PC-3 (cell line): ENCODE measurements at regions of chr11 and their contacts with region 1.

Region 1: GRCh38 chr11:18209058-18209457 is 27.5 kb downstream of the SAA4 start:
- DNase-seq: no peak
- ATAC-seq: no peak
- H3K4me3 ChIP-seq: no peak overlapping the region
- H3K27ac ChIP-seq: no peak overlapping the region
- H3K4me1 ChIP-seq: no peaks in the 10 kb centered on the region
- H3K27me3 ChIP-seq: peaks cover 16% of the 10 kb centered on the region
- CTCF ChIP-seq: no peak

Region 2: GRCh38 chr11:18253231-18253630 is 44.2 kb after region 1 on chr11:
- CTCF ChIA-PET with region 1: no interaction called
- POLR2A ChIA-PET with region 1: no interaction called
- intact Hi-C with region 1: loop called (anchors 1 kb)
- DNase-seq: no peak
- ATAC-seq: no peak
- H3K4me3 ChIP-seq: no peak overlapping the region
- H3K27ac ChIP-seq: no peak overlapping the region
- H3K4me1 ChIP-seq: no peaks in the 10 kb centered on the region
- H3K27me3 ChIP-seq: peaks cover 4% of the 10 kb centered on the region; the same call in 1 of the 2 replicates
- CTCF ChIP-seq: no peak

Region 3: GRCh38 chr11:18265949-18266348 is 56.9 kb after region 1 on chr11 and contains the start of gene SAA1:
- CTCF ChIA-PET with region 1: no interaction called
- POLR2A ChIA-PET with region 1: no interaction called
- intact Hi-C with region 1: no loop called
- DNase-seq: no peak
- ATAC-seq: no peak
- H3K4me3 ChIP-seq: no peak within 1 kb of the TSS
- H3K27ac ChIP-seq: no peak within 1 kb of the TSS
- H3K4me1 ChIP-seq: no peaks in the 10 kb centered on the region
- H3K27me3 ChIP-seq: 0 out of 2 replicates have a peak, but pooled peaks cover 6% of the 10 kb centered on the region
- CTCF ChIP-seq: no peak
- total RNA-seq, gene SAA1: not detected in 2 replicates

Region 4: DNA sequence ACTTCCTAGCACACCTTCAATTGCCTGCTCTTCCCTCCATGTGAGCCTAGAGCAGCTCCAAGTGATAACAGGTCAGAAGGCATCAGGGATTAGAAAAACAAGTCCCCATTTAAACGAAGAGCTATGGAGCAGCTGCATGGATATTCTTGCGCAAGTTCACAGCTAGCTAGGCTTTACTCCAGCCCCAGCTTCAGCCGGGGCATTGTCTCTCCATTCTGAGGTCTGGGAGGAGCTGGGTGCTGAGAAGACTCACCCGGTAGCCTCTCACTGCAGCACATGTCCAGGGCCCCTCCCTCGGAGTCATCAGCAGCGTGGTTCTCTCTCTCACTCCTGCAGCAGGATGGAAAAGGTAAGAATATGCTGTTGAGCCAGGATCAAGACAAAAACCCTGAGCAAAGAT is 556.5 kb after region 1 on chr11:
- CTCF ChIA-PET with region 1: no interaction called
- POLR2A ChIA-PET with region 1: no interaction called
- intact Hi-C with region 1: no loop called
- DNase-seq: no peak
- ATAC-seq: no peak
- H3K4me3 ChIP-seq: no peak overlapping the region
- H3K27ac ChIP-seq: no peak overlapping the region
- H3K4me1 ChIP-seq: peaks cover 16% of the 10 kb centered on the region
- H3K27me3 ChIP-seq: no peaks in the 10 kb centered on the region
- CTCF ChIP-seq: no peak